ENCODE measurements at regions of chr7 and their contacts with region 1.

Region 1: DNA sequence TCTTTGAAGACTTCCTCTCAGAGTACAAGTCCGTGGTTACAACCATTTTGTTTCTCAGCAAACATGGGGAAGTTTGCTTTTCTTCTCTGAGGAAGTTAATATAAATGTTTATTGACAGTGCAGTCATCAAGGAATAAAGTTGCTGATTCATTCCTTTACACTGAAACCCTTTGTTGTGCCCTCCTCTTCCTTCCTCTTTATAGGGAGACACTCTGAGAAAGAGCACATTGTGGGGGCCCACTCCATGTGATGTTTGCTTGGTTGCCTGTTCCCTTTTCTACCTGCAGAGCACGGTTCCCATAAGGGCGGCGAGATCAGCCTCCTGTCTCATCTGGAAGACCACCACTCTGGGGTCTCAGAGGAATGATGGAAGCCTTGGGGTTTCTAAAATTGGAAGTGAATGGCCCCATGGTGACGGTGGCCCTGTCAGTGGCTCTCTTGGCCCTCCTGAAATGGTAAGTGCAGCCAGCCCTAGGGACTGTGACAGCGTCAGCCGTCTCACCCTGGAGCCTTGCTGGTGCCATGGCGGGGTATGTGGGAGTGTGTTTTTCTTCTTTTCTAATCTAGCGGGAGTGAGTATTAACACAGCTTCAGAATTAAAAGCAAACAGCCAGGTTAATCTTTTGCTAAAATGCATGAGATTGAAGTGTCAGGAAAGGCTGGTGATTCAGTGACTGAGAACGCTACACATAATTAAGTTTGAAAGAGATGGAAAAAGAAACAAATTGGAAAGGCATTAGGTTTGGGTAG is at the start of gene TBXAS1:
- DNase-seq: no peak
- ATAC-seq: peak; percentile 91
- H3K4me3 ChIP-seq: peak within 1 kb of the TSS; percentile 27 to 49 (median 47)
- H3K27ac ChIP-seq: no peak within 1 kb of the TSS
- H3K4me1 ChIP-seq: peaks cover 31% of the 10 kb centered on the region
- H3K27me3 ChIP-seq: peaks cover 0 to 7% of the 10 kb centered on the region in 2 experiments; a peak in 3 of 5 replicates
- CTCF ChIP-seq: no peak
- EP300 ChIP-seq: no peak
- POLR2A ChIP-seq: no peak
- RAD21 ChIP-seq: no peak
- total RNA-seq, gene TBXAS1: 4.0 and 6.1 TPM in 2 replicates

Region 2: GRCh38 chr7:139631520-139632031 is 197.6 kb before region 1 on chr7:
- CTCF ChIA-PET with region 1: no interaction called
- POLR2A ChIA-PET with region 1: no interaction called
- in situ Hi-C with region 1: no loop called
- intact Hi-C with region 1: loop called (anchors 2 kb)
- DNase-seq: no peak
- ATAC-seq: no peak
- H3K4me3 ChIP-seq: no peak overlapping the region
- H3K27ac ChIP-seq: no peak overlapping the region
- H3K4me1 ChIP-seq: no peaks in the 10 kb centered on the region
- H3K27me3 ChIP-seq: no peaks in the 10 kb centered on the region
- CTCF ChIP-seq: no peak
- EP300 ChIP-seq: no peak
- POLR2A ChIP-seq: no peak
- RAD21 ChIP-seq: no peak

Region 3: DNA sequence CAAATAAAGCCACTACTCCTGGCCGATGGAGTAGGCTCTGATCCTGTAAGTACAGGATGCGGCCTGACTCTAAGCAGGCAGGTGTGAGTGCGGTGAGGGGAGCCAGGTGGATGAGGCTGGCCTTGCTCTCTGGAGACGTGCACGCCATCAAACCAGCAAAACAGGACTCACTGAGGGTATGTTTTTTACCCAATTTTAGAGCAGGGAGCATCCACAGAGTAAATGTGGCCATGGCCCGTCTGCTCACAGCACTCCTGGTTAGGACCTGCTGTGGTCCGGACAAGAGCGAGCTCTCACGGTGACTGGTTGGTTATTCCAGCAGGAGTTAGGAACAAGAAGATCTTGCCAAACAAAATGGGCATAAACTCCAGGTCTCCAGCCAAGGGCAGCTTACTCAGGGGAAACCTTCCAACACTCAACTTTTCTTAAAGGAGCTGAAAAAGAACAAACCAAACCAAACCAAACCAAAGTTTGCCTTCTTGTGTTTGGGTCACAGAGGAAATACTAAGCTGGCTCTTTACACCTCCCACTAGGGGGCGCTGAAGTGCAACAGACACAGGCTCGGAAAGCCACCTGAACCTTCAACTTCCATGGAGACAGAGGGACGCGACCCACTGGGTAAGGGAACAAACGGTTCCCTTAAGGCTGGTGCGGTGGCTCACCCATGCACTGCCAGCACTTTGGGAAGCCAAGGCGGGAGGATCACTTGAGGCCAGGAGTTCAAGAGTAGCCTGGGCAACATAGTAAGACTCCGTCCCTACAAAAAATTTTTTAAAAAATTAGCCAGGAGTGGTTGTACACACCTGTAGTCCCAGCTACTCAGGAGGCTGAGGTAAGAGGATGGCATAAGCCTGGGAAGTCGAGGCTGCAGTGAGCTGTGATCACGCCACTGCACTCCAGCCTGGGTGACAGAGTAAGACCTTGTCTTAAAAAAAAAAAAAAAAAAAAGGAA is 183.4 kb before region 1 on chr7:
- CTCF ChIA-PET with region 1: interaction called, 7 read pairs
- POLR2A ChIA-PET with region 1: no interaction called
- in situ Hi-C with region 1: no loop called
- intact Hi-C with region 1: loop called (anchors 5 kb)
- DNase-seq: peak; percentile 84
- ATAC-seq: peak; percentile 83
- H3K4me3 ChIP-seq: no peak overlapping the region
- H3K27ac ChIP-seq: no peak overlapping the region
- H3K4me1 ChIP-seq: peaks cover 65% of the 10 kb centered on the region
- H3K27me3 ChIP-seq: no peaks in the 10 kb centered on the region
- CTCF ChIP-seq: peak; percentile 95
- EP300 ChIP-seq: no peak
- POLR2A ChIP-seq: no peak
- RAD21 ChIP-seq: peak; percentile 90

Region 4: DNA sequence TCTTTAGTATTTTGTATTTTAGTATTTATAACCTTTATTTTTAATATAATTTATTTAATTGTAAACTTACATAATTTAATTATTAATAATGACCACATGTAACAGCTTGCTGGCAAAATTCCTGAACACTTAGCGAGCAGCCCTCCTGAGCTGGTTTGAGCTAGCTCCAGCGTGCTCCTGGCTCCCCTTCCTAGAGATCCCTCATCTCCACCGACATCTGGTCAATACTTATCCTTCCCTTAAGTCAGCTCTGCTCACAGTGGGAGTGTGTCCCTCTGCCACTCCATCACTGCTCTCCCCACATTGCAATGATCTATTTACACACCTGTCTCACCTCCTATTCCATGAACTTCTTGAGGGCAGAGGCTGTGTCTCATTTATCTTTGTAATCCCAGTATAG is 20.8 kb before region 1 on chr7:
- CTCF ChIA-PET with region 1: no interaction called
- POLR2A ChIA-PET with region 1: no interaction called
- in situ Hi-C with region 1: no loop called
- intact Hi-C with region 1: no loop called
- DNase-seq: no peak
- ATAC-seq: no peak
- H3K4me3 ChIP-seq: no peak overlapping the region
- H3K27ac ChIP-seq: no peak overlapping the region
- H3K4me1 ChIP-seq: peaks cover 15% of the 10 kb centered on the region
- H3K27me3 ChIP-seq: no peaks in the 10 kb centered on the region
- CTCF ChIP-seq: no peak
- EP300 ChIP-seq: no peak
- POLR2A ChIP-seq: no peak
- RAD21 ChIP-seq: no peak

Measured in HepG2 (cell line).